ENCODE measurements at regions of chr17 and their contacts with region 1.

Region 1: GRCh38 chr17:43367737-43368242 is 31.0 kb upstream of the ARL4D start:
- DNase-seq: peak in 2 of 5 donors; percentile 60 to 87
- H3K4me3 ChIP-seq: peak overlapping the region; percentile 1 to 76
- H3K4me3 Mint-ChIP-seq: peak overlapping the region; percentile 91 to 98 (median 95)
- H3K27ac ChIP-seq: peak overlapping the region; percentile 91
- H3K27ac Mint-ChIP-seq: peak overlapping the region; percentile 99 to 100 (median 100)
- H3K4me1 ChIP-seq: peaks cover 22% of the 10 kb centered on the region
- H3K4me1 Mint-ChIP-seq: peaks cover 13 to 50% (median 35%) of the 10 kb centered on the region in 4 donors
- H3K27me3 ChIP-seq: no peaks in the 10 kb centered on the region
- H3K27me3 Mint-ChIP-seq: no peaks in the 10 kb centered on the region

Region 2: DNA sequence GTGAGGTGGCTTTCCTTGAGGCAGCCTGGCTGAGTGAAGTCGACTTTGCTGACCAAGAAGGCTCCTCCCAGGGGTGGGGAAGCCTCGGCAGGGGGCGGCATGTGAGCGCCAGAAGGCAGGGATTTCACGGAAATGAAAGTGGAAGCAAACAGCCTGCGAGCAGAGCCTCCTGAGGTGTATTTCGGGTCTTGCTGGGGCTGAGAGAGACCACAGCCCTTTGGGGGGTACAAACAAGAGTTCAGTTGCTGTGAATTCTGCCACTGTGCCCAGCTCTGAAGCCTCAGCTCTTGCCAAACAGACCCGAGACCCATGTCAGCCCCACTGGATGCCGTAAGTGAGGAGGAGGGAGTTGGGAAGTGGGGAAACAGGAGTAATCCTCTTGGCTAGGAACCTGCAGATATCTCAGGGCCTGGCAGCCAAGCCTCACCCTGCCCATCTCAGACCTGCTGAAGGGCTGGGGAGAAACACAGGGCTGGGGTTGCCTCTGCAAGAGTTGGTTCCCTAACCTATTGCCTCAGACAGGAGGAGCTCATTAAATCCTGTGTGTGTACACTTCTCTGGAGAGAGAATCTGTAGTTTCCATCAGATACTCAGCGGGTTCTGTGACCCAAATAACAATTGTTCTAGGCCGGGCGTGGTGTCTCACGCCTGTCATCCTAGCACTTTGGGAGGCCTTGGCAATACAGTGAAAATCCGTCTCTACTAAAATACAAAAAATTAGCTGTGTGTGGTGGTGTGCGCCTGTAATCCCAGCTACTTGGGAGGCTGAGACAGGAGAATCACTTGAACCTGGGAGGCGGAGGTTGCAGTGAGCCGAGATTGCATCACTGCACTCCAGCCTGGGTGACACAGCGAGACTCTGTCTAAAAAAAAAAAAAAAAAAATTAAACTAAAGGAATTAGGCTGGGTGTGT is 360.9 kb before region 1 on chr17 and contains the start of gene IFI35:
- CTCF ChIA-PET with region 1: interaction called, 3 read pairs
- POLR2A ChIA-PET with region 1: interaction called, 12 read pairs
- intact Hi-C with region 1: no loop called
- DNase-seq: peak; percentile 81 to 89 (median 83)
- H3K4me3 ChIP-seq: peak within 1 kb of the TSS; percentile 94 to 95
- H3K4me3 Mint-ChIP-seq: peak within 1 kb of the TSS; percentile 100
- H3K27ac ChIP-seq: peak within 1 kb of the TSS; percentile 90
- H3K27ac Mint-ChIP-seq: peak within 1 kb of the TSS; percentile 96 to 100 (median 99)
- H3K4me1 ChIP-seq: peaks cover 21% of the 10 kb centered on the region
- H3K4me1 Mint-ChIP-seq: peaks cover 8 to 26% (median 17%) of the 10 kb centered on the region in 4 donors
- H3K27me3 ChIP-seq: no peaks in the 10 kb centered on the region
- H3K27me3 Mint-ChIP-seq: no peaks in the 10 kb centered on the region
- total RNA-seq, gene IFI35: 33.1 to 40.3 TPM

Region 3: GRCh38 chr17:43388359-43389045 is 20.7 kb after region 1 on chr17:
- CTCF ChIA-PET with region 1: interaction called, 26 read pairs
- POLR2A ChIA-PET with region 1: interaction called, 386 read pairs
- intact Hi-C with region 1: loop called (anchors 1 kb)
- DNase-seq: peak; percentile 92 to 95 (median 93)
- H3K4me3 ChIP-seq: peak overlapping the region; percentile 73 to 86
- H3K4me3 Mint-ChIP-seq: peak overlapping the region; percentile 92 to 100 (median 97)
- H3K27ac ChIP-seq: peak overlapping the region; percentile 93
- H3K27ac Mint-ChIP-seq: peak overlapping the region; percentile 97 to 100 (median 98)
- H3K4me1 ChIP-seq: peaks cover 19% of the 10 kb centered on the region
- H3K4me1 Mint-ChIP-seq: peaks cover 12 to 35% (median 27%) of the 10 kb centered on the region in 4 donors
- H3K27me3 ChIP-seq: no peaks in the 10 kb centered on the region
- H3K27me3 Mint-ChIP-seq: no peaks in the 10 kb centered on the region

Region 4: DNA sequence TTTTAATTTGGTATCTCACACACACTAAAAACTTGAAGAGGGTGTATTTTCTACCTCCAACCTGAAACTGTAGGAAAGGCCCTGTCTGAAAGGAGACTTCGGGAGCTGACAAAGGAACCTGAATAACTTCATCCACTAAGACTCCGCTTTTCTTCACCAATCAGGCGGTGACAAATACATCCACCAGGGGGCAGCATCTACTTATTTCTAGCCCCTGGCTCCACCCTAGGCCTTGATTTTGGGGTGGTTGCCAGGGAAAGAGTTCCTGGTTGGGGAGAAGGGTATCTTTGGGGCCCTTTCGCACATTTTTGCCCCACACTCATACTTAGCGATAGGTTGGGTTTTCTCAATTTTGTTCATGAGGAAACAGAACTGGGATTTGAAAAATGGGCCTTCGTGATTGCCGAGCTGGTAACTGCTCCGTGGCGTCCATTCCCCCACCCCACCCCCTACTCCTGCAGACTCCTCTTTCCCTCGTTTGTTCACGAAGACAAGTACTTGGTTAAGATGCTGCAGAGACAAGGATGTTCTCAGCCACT is 26.2 kb after region 1 on chr17:
- CTCF ChIA-PET with region 1: interaction called, 26 read pairs
- POLR2A ChIA-PET with region 1: interaction called, 386 read pairs
- intact Hi-C with region 1: loop called (anchors 1 kb)
- DNase-seq: peak; percentile 82 to 89 (median 86)
- H3K4me3 ChIP-seq: peak overlapping the region in 1 of 2 donors; percentile 30
- H3K4me3 Mint-ChIP-seq: peak overlapping the region in 4 of 8 donors; percentile 8 to 46 (median 30)
- H3K27ac ChIP-seq: no peak overlapping the region
- H3K27ac Mint-ChIP-seq: peak overlapping the region; percentile 27 to 73 (median 62)
- H3K4me1 ChIP-seq: peaks cover 41% of the 10 kb centered on the region
- H3K4me1 Mint-ChIP-seq: peaks cover 19 to 56% (median 35%) of the 10 kb centered on the region in 4 donors
- H3K27me3 ChIP-seq: no peaks in the 10 kb centered on the region
- H3K27me3 Mint-ChIP-seq: no peaks in the 10 kb centered on the region

Region 5: GRCh38 chr17:43442711-43443110 is 74.9 kb after region 1 on chr17:
- CTCF ChIA-PET with region 1: no interaction called
- POLR2A ChIA-PET with region 1: no interaction called
- intact Hi-C with region 1: no loop called
- DNase-seq: no peak
- H3K4me3 ChIP-seq: no peak overlapping the region
- H3K4me3 Mint-ChIP-seq: no peak overlapping the region
- H3K27ac ChIP-seq: no peak overlapping the region
- H3K27ac Mint-ChIP-seq: no peak overlapping the region
- H3K4me1 ChIP-seq: no peaks in the 10 kb centered on the region
- H3K4me1 Mint-ChIP-seq: no peaks in the 10 kb centered on the region
- H3K27me3 ChIP-seq: no peaks in the 10 kb centered on the region
- H3K27me3 Mint-ChIP-seq: peaks cover 6 to 10% of the 10 kb centered on the region in 2 donors

Measured in CD4-positive, alpha-beta memory T cell (primary cell).